Ovary (tissue), 10 donors: ENCODE measurements at regions of chr1 and their contacts with region 1.

Region 1: DNA sequence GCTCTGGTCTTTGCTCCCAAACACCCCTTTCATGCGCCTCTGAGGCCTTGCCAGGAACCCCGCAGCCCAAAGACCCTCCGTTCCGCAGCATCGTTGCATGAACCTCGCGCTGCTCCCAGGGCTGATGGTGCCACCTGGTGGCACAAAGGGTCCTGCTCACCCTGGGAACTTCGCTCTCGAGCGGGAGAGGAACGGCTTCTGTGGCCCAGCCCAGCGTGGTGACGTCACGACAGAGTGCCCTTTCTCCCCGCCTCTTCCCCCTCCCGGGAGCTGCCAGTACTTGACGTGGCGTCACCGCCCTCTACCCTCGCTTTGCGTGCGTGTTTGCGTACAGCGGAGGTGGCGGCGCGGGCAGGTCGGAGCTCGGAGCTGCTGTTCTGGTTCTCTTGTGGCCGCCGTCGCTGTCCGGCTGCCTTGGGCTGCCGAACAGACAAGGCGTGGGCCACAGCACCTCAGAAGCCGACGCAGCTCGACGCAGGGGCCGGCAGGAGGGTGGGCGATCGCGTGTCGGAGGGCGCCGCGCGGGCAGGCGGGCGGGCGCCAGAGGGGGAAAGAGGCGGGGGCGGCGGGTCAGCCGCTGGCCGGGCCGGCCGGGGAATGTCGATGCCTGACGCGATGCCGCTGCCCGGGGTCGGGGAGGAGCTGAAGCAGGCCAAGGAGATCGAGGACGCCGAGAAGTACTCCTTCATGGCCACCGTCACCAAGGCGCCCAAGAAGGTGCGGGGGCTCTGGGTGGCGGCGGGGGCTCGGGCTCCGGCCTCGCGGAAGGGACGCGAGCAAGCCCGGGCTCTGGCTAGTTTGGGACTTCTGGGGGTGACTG is at the start of gene AHCYL1:
- DNase-seq: peak; percentile 99 to 100 (median 100)
- H3K4me3 ChIP-seq: peak within 1 kb of the TSS; percentile 71
- H3K27ac ChIP-seq: peak within 1 kb of the TSS; percentile 92 to 95
- H3K4me1 ChIP-seq: peaks cover 11% of the 10 kb centered on the region
- H3K27me3 ChIP-seq: no peaks in the 10 kb centered on the region
- CTCF ChIP-seq: peak; percentile 96 to 99 (median 99)
- EP300 ChIP-seq: peak; percentile 85
- POLR2A ChIP-seq: peak; percentile 99
- total RNA-seq, gene AHCYL1: 41.1 to 113 (median 85.8) TPM

Region 2: DNA sequence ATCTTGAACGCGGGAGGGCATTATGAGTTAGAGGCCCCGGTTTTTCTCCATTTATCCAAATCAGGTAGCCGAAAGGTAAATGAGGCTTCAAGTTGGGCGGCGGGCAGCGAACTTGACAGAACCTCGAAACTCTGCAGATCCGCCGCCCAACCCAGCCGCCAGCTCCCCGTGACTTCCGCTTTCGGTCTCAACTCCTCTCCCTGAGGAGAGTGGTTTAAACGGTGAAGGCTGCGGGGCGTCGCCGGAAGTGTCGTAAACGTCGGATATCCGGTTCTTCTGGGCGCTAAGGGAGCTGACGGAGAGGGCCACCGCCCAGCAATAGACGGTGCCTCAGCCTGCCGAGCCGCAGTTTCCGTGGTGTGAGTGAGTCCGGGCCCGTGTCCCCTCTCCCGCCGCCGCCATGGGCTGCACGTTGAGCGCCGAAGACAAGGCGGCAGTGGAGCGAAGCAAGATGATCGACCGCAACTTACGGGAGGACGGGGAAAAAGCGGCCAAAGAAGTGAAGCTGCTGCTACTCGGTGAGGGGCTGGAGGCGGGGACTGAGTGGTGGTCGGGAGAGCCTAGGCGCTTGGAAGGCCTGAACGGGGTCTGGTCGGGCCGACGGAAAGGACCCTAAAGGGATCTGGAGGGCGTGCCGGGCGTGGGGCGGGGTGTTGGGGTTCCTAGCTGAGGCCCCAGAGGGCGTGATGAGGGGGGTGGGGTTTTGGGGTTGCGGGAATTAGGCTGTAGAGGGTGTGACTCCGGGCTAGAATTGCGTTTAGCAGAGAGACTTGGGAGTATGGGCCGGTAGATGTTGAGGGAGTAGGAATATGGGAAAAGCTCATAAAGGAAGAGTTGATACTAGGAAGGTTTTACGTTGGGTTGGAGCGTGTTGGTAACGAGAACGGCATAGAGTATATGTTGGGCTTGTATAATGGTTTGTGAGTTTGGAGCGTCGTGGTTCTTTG is 436.1 kb before region 1 on chr1 and contains the start of gene GNAI3:
- intact Hi-C with region 1: loop called in 3 of 4 experiments (anchors 5 to 10 kb)
- DNase-seq: peak; percentile 93 to 97 (median 95)
- H3K4me3 ChIP-seq: peak within 1 kb of the TSS; percentile 63
- H3K27ac ChIP-seq: peak within 1 kb of the TSS; percentile 69 to 71
- H3K4me1 ChIP-seq: peaks cover 4% of the 10 kb centered on the region
- H3K27me3 ChIP-seq: no peaks in the 10 kb centered on the region
- CTCF ChIP-seq: no peak
- EP300 ChIP-seq: no peak
- POLR2A ChIP-seq: peak; percentile 98
- total RNA-seq, gene GNAI3: 3.3 to 6.2 (median 4.8) TPM

Region 3: DNA sequence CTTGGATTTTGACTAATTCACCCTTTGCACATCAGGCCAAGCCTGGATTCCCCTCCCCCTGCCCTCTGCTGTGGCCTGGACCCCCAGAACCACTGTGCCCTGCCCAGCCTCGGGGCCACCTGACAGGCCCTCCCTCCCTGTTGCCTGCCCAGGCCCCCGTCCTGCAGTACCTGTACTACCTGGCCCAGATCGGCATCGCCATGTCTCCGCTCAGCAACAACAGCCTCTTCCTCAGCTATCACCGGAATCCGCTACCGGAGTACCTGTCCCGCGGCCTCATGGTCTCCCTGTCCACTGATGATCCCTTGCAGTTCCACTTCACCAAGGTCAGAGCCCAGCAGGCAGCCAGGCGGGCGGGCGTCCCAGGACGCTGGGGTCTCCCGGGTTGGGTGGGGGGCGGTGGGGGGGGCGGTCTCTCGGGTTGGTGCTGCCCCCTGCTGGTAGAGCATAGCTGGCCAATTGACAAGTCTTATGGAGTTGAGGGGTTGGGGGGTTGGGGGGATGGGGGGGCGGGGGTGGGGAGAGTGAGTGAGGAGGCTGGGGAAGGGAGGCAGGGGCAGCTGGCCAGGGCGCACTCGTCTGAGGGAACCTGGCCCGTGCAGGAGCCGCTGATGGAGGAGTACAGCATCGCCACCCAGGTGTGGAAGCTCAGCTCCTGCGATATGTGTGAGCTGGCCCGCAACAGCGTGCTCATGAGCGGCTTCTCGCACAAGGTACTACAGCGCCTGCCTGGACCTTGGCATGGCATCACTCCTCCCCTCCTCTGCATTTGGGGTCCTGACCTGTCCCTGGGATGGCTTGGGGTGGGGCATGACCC is 354.4 kb before region 1 on chr1:
- intact Hi-C with region 1: loop called in 2 of 4 experiments (anchors 10 kb)
- DNase-seq: peak in 3 of 5 donors; percentile 33 to 45 (median 39)
- H3K4me3 ChIP-seq: no peak overlapping the region
- H3K27ac ChIP-seq: no peak overlapping the region
- H3K4me1 ChIP-seq: peaks cover 2% of the 10 kb centered on the region
- H3K27me3 ChIP-seq: no peaks in the 10 kb centered on the region
- CTCF ChIP-seq: no peak
- EP300 ChIP-seq: no peak
- POLR2A ChIP-seq: no peak

Region 4: GRCh38 chr1:109659997-109660690 is 324.5 kb before region 1 on chr1:
- intact Hi-C with region 1: loop called in 1 of 4 experiments (anchors 5 kb)
- DNase-seq: peak; percentile 75 to 81 (median 78)
- H3K4me3 ChIP-seq: no peak overlapping the region
- H3K27ac ChIP-seq: peak overlapping the region in 1 of 2 donors; percentile 81
- H3K4me1 ChIP-seq: peaks cover 15% of the 10 kb centered on the region
- H3K27me3 ChIP-seq: no peaks in the 10 kb centered on the region
- CTCF ChIP-seq: no peak
- EP300 ChIP-seq: no peak
- POLR2A ChIP-seq: no peak

Region 5: DNA sequence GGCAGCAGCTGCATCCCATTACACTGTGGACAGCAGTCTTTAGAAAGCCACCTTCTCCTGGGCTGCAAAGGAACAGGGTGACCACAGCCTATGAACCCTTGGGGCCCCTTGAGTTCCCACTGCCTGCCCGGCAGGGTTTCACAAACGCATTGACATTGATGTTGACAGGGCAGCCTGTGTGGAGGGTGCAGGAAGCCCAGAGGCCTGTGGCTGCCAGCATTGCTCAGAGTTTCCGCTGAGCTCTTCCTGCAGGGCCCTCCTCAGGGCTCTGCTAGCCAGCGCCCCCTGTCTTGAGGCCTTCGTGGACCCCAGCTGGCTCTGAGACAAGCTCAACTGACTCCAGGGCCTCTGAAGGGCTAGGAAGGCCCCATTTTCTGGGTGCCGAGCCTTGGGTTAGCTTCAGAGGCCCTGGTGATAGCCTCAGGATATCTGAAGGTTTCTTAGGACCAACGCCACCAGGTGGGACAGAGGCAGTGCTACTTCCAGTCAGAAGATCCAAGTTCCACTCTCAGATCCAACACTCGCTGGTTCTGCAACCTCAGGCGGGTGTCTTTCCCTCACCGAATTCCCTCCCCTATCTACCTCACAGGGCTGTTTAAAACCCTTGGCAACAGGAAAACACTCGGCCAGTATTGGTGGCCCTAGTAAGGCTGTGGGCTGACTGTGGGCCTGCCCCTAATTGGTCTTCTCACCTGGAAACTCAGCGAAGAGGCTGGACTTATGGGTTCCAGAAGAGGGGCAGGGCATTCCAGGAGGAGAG is 193.8 kb before region 1 on chr1:
- intact Hi-C with region 1: loop called in 1 of 4 experiments (anchors 5 kb)
- DNase-seq: peak in 2 of 5 donors; percentile 8 to 46
- H3K4me3 ChIP-seq: no peak overlapping the region
- H3K27ac ChIP-seq: no peak overlapping the region
- H3K4me1 ChIP-seq: peaks cover 7% of the 10 kb centered on the region
- H3K27me3 ChIP-seq: no peaks in the 10 kb centered on the region
- CTCF ChIP-seq: no peak
- EP300 ChIP-seq: no peak
- POLR2A ChIP-seq: no peak

Region 6: GRCh38 chr1:109947582-109948286 is 36.9 kb before region 1 on chr1:
- intact Hi-C with region 1: no loop called
- DNase-seq: no peak
- H3K4me3 ChIP-seq: no peak overlapping the region
- H3K27ac ChIP-seq: no peak overlapping the region
- H3K4me1 ChIP-seq: no peaks in the 10 kb centered on the region
- H3K27me3 ChIP-seq: no peaks in the 10 kb centered on the region
- CTCF ChIP-seq: no peak
- EP300 ChIP-seq: no peak
- POLR2A ChIP-seq: no peak

Region 7: DNA sequence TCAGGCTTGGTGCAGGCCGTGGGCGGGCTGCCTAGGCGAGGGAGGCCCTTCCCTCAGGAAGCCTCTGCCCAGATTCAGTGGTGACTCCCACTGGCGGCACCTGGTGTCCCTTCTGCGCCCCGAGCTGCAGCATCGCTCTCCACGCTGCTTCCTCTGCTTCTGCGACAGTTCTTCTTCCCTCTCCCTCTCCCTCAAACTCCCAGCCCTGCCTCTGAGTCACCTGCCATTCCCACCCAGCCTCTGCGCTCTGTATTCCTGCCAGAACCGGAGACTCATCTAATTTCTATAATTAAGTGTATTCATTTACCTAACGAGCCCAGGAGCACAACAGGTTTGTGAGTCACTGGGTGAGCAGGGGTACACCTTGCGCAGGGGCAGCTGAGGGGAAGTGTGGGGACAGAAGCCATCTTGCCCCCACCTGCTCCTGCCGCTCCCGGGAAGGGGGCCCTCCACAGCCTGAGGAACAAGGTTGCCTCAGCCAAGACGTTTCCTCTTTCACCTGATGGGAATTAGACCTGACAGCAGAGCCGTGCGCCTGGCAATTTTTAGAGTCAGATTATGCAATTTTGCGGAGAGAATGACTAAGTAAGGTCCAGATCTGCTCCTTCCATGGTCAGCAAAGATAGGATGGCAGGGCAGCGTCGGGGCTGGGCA is 244.8 kb after region 1 on chr1:
- intact Hi-C with region 1: no loop called
- DNase-seq: no peak
- H3K4me3 ChIP-seq: no peak overlapping the region
- H3K27ac ChIP-seq: no peak overlapping the region
- H3K4me1 ChIP-seq: peaks cover 5% of the 10 kb centered on the region
- H3K27me3 ChIP-seq: no peaks in the 10 kb centered on the region
- CTCF ChIP-seq: no peak
- EP300 ChIP-seq: no peak
- POLR2A ChIP-seq: no peak